Aorta (tissue), 5 donors: ENCODE measurements at regions of chr17 and their contacts with region 1.

Region 1: GRCh38 chr17:80254396-80255251 is 6.0 kb upstream of the RNF213 start:
- DNase-seq: peak in 1 of 2 donors; percentile 65
- ATAC-seq: peak; percentile 73
- H3K4me3 ChIP-seq: no peak overlapping the region
- H3K27ac ChIP-seq: peak overlapping the region in 1 of 2 donors; percentile 94
- H3K4me1 ChIP-seq: no peaks in the 10 kb centered on the region
- H3K27me3 ChIP-seq: no peaks in the 10 kb centered on the region

Region 2: GRCh38 chr17:80221351-80222105 is 33.1 kb before region 1 on chr17:
- intact Hi-C with region 1: loop called in 1 of 2 experiments (anchors 2 kb)
- DNase-seq: no peak
- ATAC-seq: no peak
- H3K4me3 ChIP-seq: peak overlapping the region; percentile 65 to 97
- H3K27ac ChIP-seq: no peak overlapping the region
- H3K4me1 ChIP-seq: no peaks in the 10 kb centered on the region
- H3K27me3 ChIP-seq: no peaks in the 10 kb centered on the region